ENCODE measurements at regions of chr11 and their contacts with region 1.

Region 1: DNA sequence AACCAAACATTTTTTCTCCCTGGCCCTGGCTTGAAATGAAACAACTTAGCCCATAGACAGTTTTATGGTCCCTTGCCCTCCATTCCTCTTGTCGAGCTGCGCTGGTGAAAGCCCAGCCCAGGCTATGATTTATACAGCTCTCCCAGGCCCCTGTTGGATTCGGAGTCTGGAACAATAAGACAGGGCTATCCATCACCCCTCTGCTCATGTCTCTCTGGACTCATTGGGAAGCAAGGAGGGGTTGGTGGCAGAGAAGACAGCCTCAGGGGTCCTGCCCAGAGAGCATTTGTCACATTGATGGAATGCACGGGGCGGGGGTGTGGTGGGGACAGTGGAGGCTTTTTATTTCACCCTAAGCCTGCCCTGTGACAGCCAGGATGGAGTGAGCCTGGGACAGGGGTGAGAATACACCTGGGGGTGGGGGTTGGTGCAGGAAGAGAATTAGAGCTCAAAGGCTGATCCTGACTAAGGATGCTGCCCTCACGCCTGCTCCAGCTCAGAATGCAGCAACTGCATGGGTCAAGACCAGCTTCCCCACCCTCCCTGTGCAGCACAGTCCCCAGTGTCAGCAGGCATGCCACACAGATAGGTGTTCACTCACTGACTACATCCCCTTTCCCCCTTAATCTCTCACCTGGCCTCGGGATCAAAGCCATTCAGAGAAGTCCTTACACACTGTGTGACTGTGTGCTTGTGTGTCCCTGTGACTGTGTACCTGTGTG is 10.0 kb upstream of the PKNOX2 start:
- DNase-seq: no peak
- ATAC-seq: no peak
- H3K4me3 ChIP-seq: no peak overlapping the region
- H3K4me3 Mint-ChIP-seq: no peak overlapping the region
- H3K27ac ChIP-seq: no peak overlapping the region
- H3K27ac Mint-ChIP-seq: no peak overlapping the region
- H3K4me1 ChIP-seq: no peaks in the 10 kb centered on the region
- H3K4me1 Mint-ChIP-seq: no peaks in the 10 kb centered on the region
- H3K27me3 ChIP-seq: peaks cover 7 to 34% of the 10 kb centered on the region in 2 experiments
- H3K27me3 Mint-ChIP-seq: peaks cover 28 to 48% of the 10 kb centered on the region in 2 donors

Region 2: DNA sequence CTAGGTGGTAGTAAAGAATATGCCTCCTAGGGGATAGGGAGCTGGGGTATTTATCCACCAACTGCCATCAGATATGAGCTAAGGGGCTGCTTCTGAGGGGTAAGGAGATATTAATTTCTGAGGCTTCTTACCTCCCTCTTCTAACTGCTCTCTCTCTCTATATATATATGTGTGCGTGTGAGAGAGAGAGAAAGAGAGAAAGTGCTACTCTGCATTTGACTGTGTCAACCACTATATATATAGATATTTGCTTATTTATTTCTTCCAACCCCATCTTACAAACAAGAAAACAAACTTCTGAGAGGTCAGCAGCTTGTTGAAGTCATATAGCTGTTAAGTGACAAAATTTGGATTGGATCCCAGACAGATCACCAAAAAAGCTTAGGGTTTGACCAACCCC is 212.8 kb before region 1 on chr11:
- CTCF ChIA-PET with region 1: interaction called in 1 of 2 experiments, 10 read pairs
- POLR2A ChIA-PET with region 1: no interaction called
- DNase-seq: no peak
- ATAC-seq: no peak
- H3K4me3 ChIP-seq: no peak overlapping the region
- H3K4me3 Mint-ChIP-seq: no peak overlapping the region
- H3K27ac ChIP-seq: no peak overlapping the region
- H3K27ac Mint-ChIP-seq: peak overlapping the region in 1 of 2 donors; percentile 5
- H3K4me1 ChIP-seq: peaks cover 10 to 14% of the 10 kb centered on the region in 2 experiments
- H3K4me1 Mint-ChIP-seq: peaks cover 12 to 22% (median 20%) of the 10 kb centered on the region in 3 donors
- H3K27me3 ChIP-seq: no peaks in the 10 kb centered on the region
- H3K27me3 Mint-ChIP-seq: peaks cover 0 to 3% of the 10 kb centered on the region in 2 donors

Measured in T-cell (primary cell).